MCF 10A (cell line): ENCODE measurements at regions of chr14 and their contacts with region 1.

Region 1: DNA sequence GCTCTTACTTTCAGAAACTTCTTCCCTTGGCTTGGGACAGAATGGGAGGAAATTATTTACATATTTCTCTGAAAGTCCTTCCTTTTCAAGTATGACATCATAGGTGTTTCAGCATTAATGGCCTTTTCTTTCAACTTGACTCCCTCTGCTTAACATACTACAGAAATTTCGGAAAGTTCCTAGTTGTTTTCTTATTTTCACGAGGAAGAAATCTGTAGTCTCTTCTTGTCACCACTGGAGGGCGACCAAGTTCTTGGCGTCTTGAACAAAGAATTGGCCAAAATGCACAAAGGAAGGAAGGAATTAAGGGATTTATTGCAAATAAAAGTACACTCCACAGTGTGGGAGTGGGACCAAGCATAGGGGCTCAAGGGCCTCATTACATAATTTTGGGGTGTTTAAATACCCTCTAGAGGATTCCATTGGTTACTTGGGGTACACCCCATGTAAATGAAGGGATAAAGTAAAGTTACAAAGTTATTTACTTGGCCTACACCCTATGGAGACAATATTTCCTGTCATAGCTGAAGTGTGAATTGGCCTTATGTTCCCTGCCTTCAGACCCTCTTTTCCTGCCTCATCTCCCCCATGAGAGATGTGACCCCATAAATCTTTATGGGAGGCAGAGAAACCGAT is 70.4 kb downstream of the RPL10L start:
- DNase-seq: peak; percentile 63
- H3K4me3 Mint-ChIP-seq: no peak overlapping the region
- H3K27ac Mint-ChIP-seq: no peak overlapping the region
- H3K4me1 Mint-ChIP-seq: no peaks in the 10 kb centered on the region
- H3K27me3 Mint-ChIP-seq: peaks cover 38% of the 10 kb centered on the region
- CTCF ChIP-seq: peak; percentile 60

Region 2: DNA sequence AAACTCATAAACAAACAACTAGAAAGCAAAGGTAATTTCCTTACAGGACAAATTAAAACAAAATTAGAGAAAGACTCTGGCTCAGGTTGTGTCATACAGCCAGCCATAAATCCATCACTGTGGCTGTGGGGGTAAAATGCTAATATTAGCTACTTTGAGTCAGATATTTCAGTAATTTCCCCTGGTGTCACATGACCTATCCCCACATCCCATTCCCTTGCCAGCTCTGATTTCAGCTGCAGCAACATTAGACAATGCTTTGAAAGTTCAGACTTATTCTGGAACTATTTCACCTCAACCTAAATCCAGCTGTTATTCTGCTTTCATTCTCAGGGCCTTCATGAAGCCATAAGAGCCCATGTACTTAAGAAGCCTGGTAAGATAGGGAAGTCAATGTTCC is 15.1 kb after region 1 on chr14:
- CTCF ChIA-PET with region 1: interaction called, 11 read pairs
- POLR2A ChIA-PET with region 1: interaction called, 3 read pairs
- intact Hi-C with region 1: no loop called
- DNase-seq: no peak
- H3K4me3 Mint-ChIP-seq: no peak overlapping the region
- H3K27ac Mint-ChIP-seq: no peak overlapping the region
- H3K4me1 Mint-ChIP-seq: no peaks in the 10 kb centered on the region
- H3K27me3 Mint-ChIP-seq: peaks cover 39% of the 10 kb centered on the region
- CTCF ChIP-seq: no peak

Region 3: GRCh38 chr14:46769292-46769691 is 188.1 kb after region 1 on chr14:
- CTCF ChIA-PET with region 1: no interaction called
- POLR2A ChIA-PET with region 1: no interaction called
- intact Hi-C with region 1: no loop called
- DNase-seq: no peak
- H3K4me3 Mint-ChIP-seq: no peak overlapping the region
- H3K27ac Mint-ChIP-seq: no peak overlapping the region
- H3K4me1 Mint-ChIP-seq: no peaks in the 10 kb centered on the region
- H3K27me3 Mint-ChIP-seq: peaks cover 41% of the 10 kb centered on the region
- CTCF ChIP-seq: no peak